SK-N-SH (cell line): ENCODE measurements at regions of chr9 and their contacts with region 1.

Region 1: DNA sequence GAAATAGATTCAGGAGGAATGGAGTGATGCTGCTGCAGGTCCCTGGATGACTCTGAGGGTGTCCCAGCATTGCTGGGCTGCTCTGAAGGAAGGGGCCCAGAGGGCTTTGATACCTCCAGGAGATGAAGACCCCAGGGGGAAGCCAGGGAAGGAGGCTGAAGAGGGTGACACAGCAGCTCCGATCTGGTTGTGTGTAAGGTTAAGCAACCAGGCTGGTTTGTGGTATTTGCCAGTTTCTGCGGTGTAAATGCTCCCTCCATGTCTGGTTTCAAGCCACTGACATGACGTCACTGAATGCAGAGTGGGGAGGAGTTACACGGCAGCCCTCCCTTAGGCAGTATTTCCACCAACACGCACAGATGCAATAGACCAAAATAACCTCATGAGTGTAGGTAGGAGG is 40.0 kb upstream of the ORM1 start:
- DNase-seq: peak; percentile 76
- H3K4me3 ChIP-seq: no peak overlapping the region
- H3K27ac ChIP-seq: peak overlapping the region; percentile 17 to 49; a peak in 3 of 4 replicates
- H3K4me1 ChIP-seq: peaks cover 18 to 50% of the 10 kb centered on the region in 2 experiments
- H3K27me3 ChIP-seq: no peaks in the 10 kb centered on the region
- CTCF ChIP-seq: no peak
- EP300 ChIP-seq: no peak
- RAD21 ChIP-seq: no peak

Region 2: DNA sequence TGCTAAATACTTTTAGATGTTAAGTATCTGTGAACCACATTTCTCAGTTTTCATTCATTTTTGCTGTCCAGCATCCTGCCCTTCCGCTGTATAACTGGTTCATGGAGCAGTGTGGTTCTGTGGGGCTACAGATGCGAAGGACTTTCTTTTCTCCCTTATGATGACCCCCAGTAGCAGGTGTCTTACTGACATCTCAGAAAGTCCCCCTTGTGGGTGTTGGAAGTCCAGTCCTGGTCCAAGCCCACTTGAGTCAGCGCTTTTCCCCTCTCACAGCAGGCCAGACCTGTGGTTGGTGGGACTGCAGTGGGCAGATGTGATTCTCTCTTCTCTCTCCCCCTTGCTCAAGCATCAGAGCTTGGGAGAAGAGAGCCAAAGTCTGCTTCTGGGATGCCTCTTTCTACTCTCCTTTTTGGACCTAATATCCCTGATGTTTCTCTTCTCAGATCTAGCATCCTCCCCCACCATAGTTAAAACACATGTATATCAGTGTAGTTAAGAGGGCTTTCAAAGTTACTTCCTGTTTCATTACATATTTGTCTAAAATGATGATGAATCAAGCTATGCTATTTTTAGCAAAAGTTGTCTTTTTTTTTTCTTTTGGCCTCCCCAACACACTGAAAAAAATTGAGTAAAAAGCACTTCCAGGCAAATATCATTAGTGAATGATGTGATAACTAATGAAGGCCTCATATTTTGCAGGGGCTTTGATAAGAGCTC is 526.3 kb before region 1 on chr9:
- CTCF ChIA-PET with region 1: no interaction called
- POLR2A ChIA-PET with region 1: no interaction called
- DNase-seq: no peak
- H3K4me3 ChIP-seq: no peak overlapping the region
- H3K27ac ChIP-seq: no peak overlapping the region
- H3K4me1 ChIP-seq: peaks cover 0 to 10% of the 10 kb centered on the region in 2 experiments; a peak in 1 of 4 replicates
- H3K27me3 ChIP-seq: no peaks in the 10 kb centered on the region
- CTCF ChIP-seq: no peak
- EP300 ChIP-seq: no peak
- RAD21 ChIP-seq: no peak

Region 3: GRCh38 chr9:114117996-114118830 is 164.7 kb before region 1 on chr9:
- CTCF ChIA-PET with region 1: no interaction called
- POLR2A ChIA-PET with region 1: no interaction called
- DNase-seq: no peak
- H3K4me3 ChIP-seq: no peak overlapping the region
- H3K27ac ChIP-seq: no peak overlapping the region
- H3K4me1 ChIP-seq: no peaks in the 10 kb centered on the region; a peak in 1 of 4 replicates
- H3K27me3 ChIP-seq: peaks cover 5% of the 10 kb centered on the region; the same call in 1 of the 2 replicates
- CTCF ChIP-seq: no peak
- EP300 ChIP-seq: no peak
- RAD21 ChIP-seq: no peak

Region 4: GRCh38 chr9:114238891-114239875 is 43.7 kb before region 1 on chr9:
- CTCF ChIA-PET with region 1: interaction called, 137 read pairs
- POLR2A ChIA-PET with region 1: no interaction called
- DNase-seq: peak; percentile 94
- H3K4me3 ChIP-seq: no peak overlapping the region
- H3K27ac ChIP-seq: no peak overlapping the region; a peak in 1 of 4 replicates
- H3K4me1 ChIP-seq: peaks cover 0 to 42% of the 10 kb centered on the region in 2 experiments; a peak in 2 of 4 replicates
- H3K27me3 ChIP-seq: no peaks in the 10 kb centered on the region
- CTCF ChIP-seq: peak; percentile 46
- EP300 ChIP-seq: 0 out of 4 replicates have a peak, but pooled peaks of 1 of the 2 experiments have one; percentile 21
- RAD21 ChIP-seq: peak; percentile 87

Region 5: DNA sequence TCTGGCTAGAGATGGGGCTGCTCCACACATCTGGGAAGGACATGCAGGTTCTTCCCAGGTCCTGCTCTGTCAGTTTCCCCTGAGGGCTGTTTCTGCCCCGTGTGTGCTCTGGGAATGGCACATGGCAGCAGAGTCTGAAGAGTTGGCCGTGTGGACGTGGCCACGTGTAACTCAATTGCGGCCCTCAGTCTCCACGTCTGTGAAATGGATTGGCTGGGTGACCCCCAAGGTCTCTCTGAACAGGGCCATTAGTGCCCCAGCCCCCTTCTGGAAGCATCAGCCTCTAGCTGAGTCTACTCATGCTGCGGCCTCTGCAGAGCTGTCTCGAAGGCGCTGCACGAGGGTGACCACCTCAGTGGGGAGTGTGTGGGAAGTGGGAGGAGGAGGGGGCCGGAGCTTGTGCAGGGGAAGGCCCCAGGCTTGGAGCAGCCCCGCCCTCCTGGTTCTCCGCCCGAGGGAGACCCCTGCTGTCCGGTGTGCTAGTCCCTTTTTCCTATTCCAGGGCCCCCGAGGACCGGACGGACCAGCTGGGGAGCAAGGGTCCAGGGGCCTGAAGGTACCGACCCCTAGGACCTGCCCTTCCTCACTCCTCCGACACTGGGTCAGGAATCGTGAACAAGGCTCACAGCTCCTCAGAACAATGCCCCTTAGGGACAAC is 18.9 kb before region 1 on chr9:
- CTCF ChIA-PET with region 1: interaction called, 85 read pairs
- POLR2A ChIA-PET with region 1: no interaction called
- DNase-seq: no peak
- H3K4me3 ChIP-seq: no peak overlapping the region
- H3K27ac ChIP-seq: no peak overlapping the region
- H3K4me1 ChIP-seq: peaks cover 0 to 19% of the 10 kb centered on the region in 2 experiments; a peak in 1 of 4 replicates
- H3K27me3 ChIP-seq: no peaks in the 10 kb centered on the region
- CTCF ChIP-seq: no peak
- EP300 ChIP-seq: no peak
- RAD21 ChIP-seq: peak; percentile 28; the same call in 1 of the 2 replicates

Region 6: GRCh38 chr9:114271641-114272081 is 11.3 kb before region 1 on chr9:
- CTCF ChIA-PET with region 1: interaction called, 85 read pairs
- POLR2A ChIA-PET with region 1: no interaction called
- DNase-seq: peak; percentile 78
- H3K4me3 ChIP-seq: no peak overlapping the region
- H3K27ac ChIP-seq: no peak overlapping the region
- H3K4me1 ChIP-seq: peaks cover 0 to 2% of the 10 kb centered on the region in 2 experiments; a peak in 1 of 4 replicates
- H3K27me3 ChIP-seq: no peaks in the 10 kb centered on the region
- CTCF ChIP-seq: peak; percentile 55
- EP300 ChIP-seq: no peak
- RAD21 ChIP-seq: peak; percentile 80